HepG2 (cell line): ENCODE measurements at regions of chr5 and their contacts with region 1.

Region 1: GRCh38 chr5:132293066-132293991 is 865 bp upstream of the SLC22A4 start:
- DNase-seq: peak; percentile 82
- ATAC-seq: peak; percentile 84
- H3K4me3 ChIP-seq: peak overlapping the region; percentile 51 to 79 (median 55)
- H3K27ac ChIP-seq: peak overlapping the region; percentile 92
- H3K4me1 ChIP-seq: peaks cover 27% of the 10 kb centered on the region
- H3K27me3 ChIP-seq: no peaks in the 10 kb centered on the region; a peak in 2 of 5 replicates
- CTCF ChIP-seq: peak; percentile 43
- EP300 ChIP-seq: no peak
- POLR2A ChIP-seq: peak; percentile 57 to 79
- RAD21 ChIP-seq: no peak; the same call in 1 of the 2 replicates

Region 2: GRCh38 chr5:131735393-131735792 is 557.9 kb before region 1 on chr5:
- CTCF ChIA-PET with region 1: no interaction called
- POLR2A ChIA-PET with region 1: no interaction called
- in situ Hi-C with region 1: no loop called
- intact Hi-C with region 1: no loop called
- DNase-seq: no peak
- ATAC-seq: no peak
- H3K4me3 ChIP-seq: no peak overlapping the region
- H3K27ac ChIP-seq: no peak overlapping the region
- H3K4me1 ChIP-seq: no peaks in the 10 kb centered on the region
- H3K27me3 ChIP-seq: no peaks in the 10 kb centered on the region
- CTCF ChIP-seq: no peak
- EP300 ChIP-seq: no peak
- POLR2A ChIP-seq: no peak
- RAD21 ChIP-seq: no peak

Region 3: DNA sequence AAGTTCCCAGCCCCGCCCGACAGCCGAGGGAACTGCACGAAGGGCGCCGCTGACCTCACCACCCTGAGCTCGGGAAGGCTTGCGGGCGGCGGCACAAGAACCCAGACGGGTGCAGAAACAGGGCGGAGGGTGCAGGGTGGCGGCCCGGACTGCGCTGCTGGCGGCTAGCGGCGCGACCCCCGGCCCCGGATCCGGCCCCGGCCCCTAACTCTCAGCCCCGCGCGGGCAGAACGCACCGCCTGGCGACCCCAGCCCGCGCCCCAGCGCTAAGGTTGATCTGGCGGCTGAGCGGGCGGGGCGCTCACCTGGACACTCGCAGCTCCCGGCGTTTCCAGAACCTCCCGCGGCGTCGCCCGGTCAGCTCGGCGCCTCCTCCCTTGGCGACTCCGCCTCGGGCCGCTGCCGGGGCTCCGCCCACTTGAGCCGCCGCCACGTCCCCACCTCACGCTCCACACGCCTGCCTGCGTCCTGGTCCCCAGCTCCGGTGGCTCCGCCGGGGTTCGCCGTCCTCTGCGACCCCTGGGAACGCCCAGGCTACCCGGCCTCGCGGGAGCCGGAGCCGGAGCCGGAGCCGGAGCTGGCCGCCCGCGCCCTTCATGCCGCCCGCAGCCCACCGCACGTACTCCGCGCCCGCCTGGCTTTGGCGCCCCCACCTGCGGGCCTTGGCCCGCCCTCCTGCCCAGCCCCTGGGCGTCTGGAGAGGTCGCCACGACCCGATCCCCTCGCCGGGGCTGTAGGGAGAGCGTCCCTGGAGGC is 65.7 kb before region 1 on chr5 and contains the start of gene P4HA2:
- CTCF ChIA-PET with region 1: no interaction called
- POLR2A ChIA-PET with region 1: interaction called, 21 read pairs
- in situ Hi-C with region 1: no loop called
- intact Hi-C with region 1: no loop called
- DNase-seq: peak; percentile 64
- ATAC-seq: peak; percentile 90
- H3K4me3 ChIP-seq: peak within 1 kb of the TSS; percentile 81 to 88 (median 82)
- H3K27ac ChIP-seq: peak within 1 kb of the TSS; percentile 67
- H3K4me1 ChIP-seq: peaks cover 44% of the 10 kb centered on the region
- H3K27me3 ChIP-seq: peaks cover 0 to 6% of the 10 kb centered on the region in 2 experiments; a peak in 2 of 5 replicates
- CTCF ChIP-seq: peak; percentile 43; the same call in 1 of the 2 replicates
- EP300 ChIP-seq: no peak
- POLR2A ChIP-seq: peak; percentile 44 to 88; a peak in 3 of 4 replicates
- RAD21 ChIP-seq: no peak; the same call in 1 of the 2 replicates
- total RNA-seq, gene P4HA2: 16.5 and 37.7 TPM in 2 replicates

Region 4: GRCh38 chr5:132272311-132273210 is 20.8 kb before region 1 on chr5:
- CTCF ChIA-PET with region 1: no interaction called
- POLR2A ChIA-PET with region 1: interaction called, 28 read pairs
- in situ Hi-C with region 1: no loop called
- intact Hi-C with region 1: no loop called
- DNase-seq: peak; percentile 38
- ATAC-seq: peak; percentile 36
- H3K4me3 ChIP-seq: no peak overlapping the region
- H3K27ac ChIP-seq: no peak overlapping the region
- H3K4me1 ChIP-seq: peaks cover 52% of the 10 kb centered on the region
- H3K27me3 ChIP-seq: no peaks in the 10 kb centered on the region; a peak in 1 of 5 replicates
- CTCF ChIP-seq: peak; percentile 70
- EP300 ChIP-seq: no peak
- POLR2A ChIP-seq: no peak
- RAD21 ChIP-seq: peak; percentile 38; the same call in 1 of the 2 replicates

Region 5: GRCh38 chr5:132277971-132278911 is 15.1 kb before region 1 on chr5:
- CTCF ChIA-PET with region 1: no interaction called
- POLR2A ChIA-PET with region 1: interaction called, 28 read pairs
- in situ Hi-C with region 1: no loop called
- intact Hi-C with region 1: no loop called
- DNase-seq: peak; percentile 63
- ATAC-seq: peak; percentile 84
- H3K4me3 ChIP-seq: peak overlapping the region in 1 of 3 experiments; percentile 38; a peak in 2 of 6 replicates
- H3K27ac ChIP-seq: peak overlapping the region; percentile 78
- H3K4me1 ChIP-seq: peaks cover 31% of the 10 kb centered on the region
- H3K27me3 ChIP-seq: no peaks in the 10 kb centered on the region; a peak in 1 of 5 replicates
- CTCF ChIP-seq: peak; percentile 8; the same call in 1 of the 2 replicates
- EP300 ChIP-seq: peak in 1 of 2 experiments; percentile 19; a peak in 1 of 4 replicates
- POLR2A ChIP-seq: no peak
- RAD21 ChIP-seq: no peak

Region 6: GRCh38 chr5:132369474-132370180 is 76.3 kb after region 1 on chr5 and contains the start of gene SLC22A5:
- CTCF ChIA-PET with region 1: no interaction called
- POLR2A ChIA-PET with region 1: interaction called, 51 read pairs
- in situ Hi-C with region 1: no loop called
- intact Hi-C with region 1: loop called (anchors 5 kb)
- DNase-seq: peak; percentile 62
- ATAC-seq: peak; percentile 93
- H3K4me3 ChIP-seq: peak within 1 kb of the TSS; percentile 71 to 84 (median 77)
- H3K27ac ChIP-seq: peak within 1 kb of the TSS; percentile 91
- H3K4me1 ChIP-seq: peaks cover 35% of the 10 kb centered on the region
- H3K27me3 ChIP-seq: no peaks in the 10 kb centered on the region
- CTCF ChIP-seq: no peak
- EP300 ChIP-seq: peak in 1 of 2 experiments; percentile 8; a peak in 1 of 4 replicates
- POLR2A ChIP-seq: peak; percentile 68 to 72
- RAD21 ChIP-seq: peak; percentile 52
- total RNA-seq, gene SLC22A5: 4.0 and 7.1 TPM in 2 replicates

Region 7: GRCh38 chr5:132446669-132447068 is 153.3 kb after region 1 on chr5:
- CTCF ChIA-PET with region 1: no interaction called
- POLR2A ChIA-PET with region 1: no interaction called
- in situ Hi-C with region 1: no loop called
- intact Hi-C with region 1: no loop called
- DNase-seq: no peak
- ATAC-seq: no peak
- H3K4me3 ChIP-seq: no peak overlapping the region
- H3K27ac ChIP-seq: no peak overlapping the region
- H3K4me1 ChIP-seq: no peaks in the 10 kb centered on the region
- H3K27me3 ChIP-seq: no peaks in the 10 kb centered on the region
- CTCF ChIP-seq: no peak
- EP300 ChIP-seq: no peak
- POLR2A ChIP-seq: no peak
- RAD21 ChIP-seq: no peak